ENCODE measurements at regions of chr6 and their contacts with region 1.

Region 1: DNA sequence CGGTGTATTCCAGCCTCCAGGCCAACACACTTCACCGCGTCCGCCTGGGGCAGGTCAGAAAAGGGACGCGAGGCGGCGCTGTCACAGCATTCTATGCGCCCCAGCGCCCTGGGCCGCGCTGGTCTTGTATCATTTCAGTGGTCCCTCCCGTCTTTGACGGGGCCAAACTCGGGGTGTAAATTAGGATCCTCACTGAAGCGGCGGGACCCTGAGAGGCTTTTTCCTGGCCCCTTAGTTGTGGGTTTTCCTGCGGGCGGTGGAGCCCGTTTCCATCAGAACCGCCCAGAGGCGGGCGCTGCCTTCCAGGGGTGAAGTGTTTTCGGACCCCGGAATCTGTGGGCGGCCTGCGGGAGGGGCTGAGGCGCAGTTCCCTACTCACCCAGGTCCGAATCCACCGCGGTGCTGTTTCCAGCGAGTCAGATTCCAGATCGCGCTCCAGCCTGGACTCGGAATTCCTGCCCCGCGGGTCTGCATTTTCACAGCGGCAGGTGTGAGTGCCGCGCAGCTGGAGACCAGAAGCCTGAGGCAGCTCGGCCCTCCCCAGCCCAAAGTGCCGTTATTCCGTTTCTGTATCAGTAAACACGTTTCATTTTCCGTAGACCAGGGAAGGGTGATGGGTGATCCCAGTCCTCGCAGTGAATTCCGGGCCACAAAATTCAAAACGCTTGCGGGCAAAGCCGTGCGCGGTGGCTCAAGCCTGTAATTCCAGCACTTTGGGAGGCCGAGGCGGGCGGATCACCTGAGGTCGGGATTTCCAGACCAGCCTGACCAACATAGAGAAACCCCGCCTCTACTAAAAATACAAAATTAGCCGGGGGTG is 3.9 kb upstream of the MICB start:
- DNase-seq: peak; percentile 69
- H3K4me3 Mint-ChIP-seq: peak overlapping the region; percentile 89
- H3K27ac Mint-ChIP-seq: peak overlapping the region; percentile 85
- H3K4me1 Mint-ChIP-seq: peaks cover 46% of the 10 kb centered on the region
- H3K27me3 Mint-ChIP-seq: no peaks in the 10 kb centered on the region

Region 2: DNA sequence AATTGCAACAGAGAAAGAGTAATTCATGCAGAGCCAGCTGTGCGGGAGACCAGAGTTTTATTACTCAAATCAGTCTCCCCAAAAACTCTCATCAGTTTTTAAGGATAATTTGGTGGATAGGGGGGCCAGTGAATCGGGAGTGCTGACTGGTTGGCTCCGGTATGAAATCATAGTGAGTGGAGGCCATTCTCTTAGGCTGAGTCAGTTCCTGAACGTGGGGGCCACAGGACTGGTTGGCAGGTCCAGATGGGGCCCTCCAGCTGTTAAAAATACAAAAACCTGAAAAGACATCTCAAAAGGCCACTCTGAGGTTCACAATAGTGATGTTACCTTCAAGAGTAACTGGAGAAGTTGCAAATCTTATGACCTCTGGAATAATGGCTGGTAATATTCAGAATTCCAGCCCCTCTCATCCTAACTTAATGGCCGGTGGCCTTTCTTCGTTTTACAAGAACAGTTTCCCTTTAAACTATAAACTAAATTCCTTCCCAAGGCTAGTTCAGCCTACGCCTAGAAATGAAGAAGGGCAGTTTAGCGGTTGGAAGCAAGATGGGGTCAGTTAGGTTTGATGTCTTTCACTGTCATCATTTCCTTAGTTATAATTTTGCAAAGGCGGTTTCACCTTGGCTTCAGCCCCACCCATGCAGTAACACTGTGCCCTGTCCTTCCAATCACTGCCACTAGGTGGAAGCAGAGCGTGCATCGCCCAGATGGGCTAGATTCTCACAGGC is 97.5 kb before region 1 on chr6:
- intact Hi-C with region 1: loop called (anchors 2 kb)
- DNase-seq: peak; percentile 81
- H3K4me3 Mint-ChIP-seq: no peak overlapping the region
- H3K27ac Mint-ChIP-seq: peak overlapping the region; percentile 42
- H3K4me1 Mint-ChIP-seq: peaks cover 21% of the 10 kb centered on the region
- H3K27me3 Mint-ChIP-seq: peaks cover 2% of the 10 kb centered on the region

Region 3: GRCh38 chr6:31462964-31463870 is 30.9 kb before region 1 on chr6:
- intact Hi-C with region 1: loop called (anchors 2 kb)
- DNase-seq: peak; percentile 90
- H3K4me3 Mint-ChIP-seq: peak overlapping the region; percentile 100
- H3K27ac Mint-ChIP-seq: peak overlapping the region; percentile 87
- H3K4me1 Mint-ChIP-seq: peaks cover 63% of the 10 kb centered on the region
- H3K27me3 Mint-ChIP-seq: peaks cover 9% of the 10 kb centered on the region

Region 4: DNA sequence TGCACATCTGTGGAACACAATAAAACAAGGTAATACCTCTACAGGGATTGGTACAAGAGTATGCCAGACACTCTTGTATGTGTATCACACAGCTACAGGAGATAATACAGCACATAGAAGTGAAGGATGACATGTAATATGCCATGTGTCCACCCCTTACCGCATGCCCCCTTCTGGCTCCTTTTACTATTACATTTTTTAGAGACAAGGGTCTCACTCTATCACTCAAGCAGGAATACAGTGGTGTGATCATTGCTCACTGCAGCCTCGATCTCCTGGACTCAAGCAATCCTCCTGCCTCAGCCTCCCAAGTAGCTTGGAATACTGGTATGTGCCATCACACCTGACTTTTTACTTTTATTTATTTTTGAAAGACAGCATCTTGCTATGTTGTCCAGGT is 102.9 kb after region 1 on chr6:
- intact Hi-C with region 1: loop called (anchors 1 kb)
- DNase-seq: no peak
- H3K4me3 Mint-ChIP-seq: no peak overlapping the region
- H3K27ac Mint-ChIP-seq: no peak overlapping the region
- H3K4me1 Mint-ChIP-seq: peaks cover 52% of the 10 kb centered on the region
- H3K27me3 Mint-ChIP-seq: no peaks in the 10 kb centered on the region

Region 5: DNA sequence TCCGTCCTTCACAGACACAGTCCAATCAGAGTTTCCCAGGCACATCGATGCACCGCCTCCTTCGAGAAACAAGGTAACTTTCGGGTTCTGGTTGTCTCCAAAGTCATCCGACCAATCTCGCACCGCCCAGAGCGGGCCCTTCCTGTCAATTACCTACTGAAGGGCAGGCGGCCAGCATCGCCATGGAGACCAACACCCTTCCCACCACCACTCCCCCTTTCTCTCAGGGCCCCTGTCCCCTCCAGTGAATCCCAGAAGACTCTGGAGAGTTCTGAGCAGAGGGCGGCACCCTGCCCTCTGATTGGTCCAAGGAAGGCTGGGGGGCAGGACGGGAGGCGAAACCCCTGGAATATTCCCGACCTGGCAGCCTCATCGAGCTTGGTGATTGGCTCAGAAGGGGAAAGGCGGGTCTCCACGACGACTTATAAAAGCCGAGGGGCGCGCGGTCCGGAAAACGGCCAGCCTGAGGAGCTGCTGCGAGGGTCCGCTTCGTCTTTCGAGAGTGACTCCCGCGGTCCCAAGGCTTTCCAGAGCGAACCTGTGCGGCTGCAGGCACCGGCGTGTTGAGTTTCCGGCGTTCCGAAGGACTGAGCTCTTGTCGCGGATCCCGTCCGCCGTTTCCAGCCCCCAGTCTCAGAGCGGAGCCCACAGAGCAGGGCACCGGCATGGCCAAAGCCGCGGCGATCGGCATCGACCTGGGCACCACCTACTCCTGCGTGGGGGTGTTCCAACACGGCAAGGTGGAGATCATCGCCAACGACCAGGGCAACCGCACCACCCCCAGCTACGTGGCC is 333.4 kb after region 1 on chr6 and contains the start of gene HSPA1B:
- intact Hi-C with region 1: loop called (anchors 10 kb)
- DNase-seq: peak; percentile 95
- H3K4me3 Mint-ChIP-seq: peak within 1 kb of the TSS; percentile 83
- H3K27ac Mint-ChIP-seq: peak within 1 kb of the TSS; percentile 93
- H3K4me1 Mint-ChIP-seq: peaks cover 41% of the 10 kb centered on the region
- H3K27me3 Mint-ChIP-seq: no peaks in the 10 kb centered on the region
- total RNA-seq, gene HSPA1B: 152 and 155 TPM in 2 replicates

Measured in activated T-helper 1 cell treated with anti-CD3 and anti-CD28 coated beads, Interleukin-12 subunit alpha, Interleukin-12 subunit beta, Interleukin-2, Interleukin-4 antibody, amounts not matched to agents 30 ng/mL and 10 ng/mL and 1 ng/mL, durations not matched to agents 14 hours and 24 hours and 36 hours (primary cell).